A549 (cell line): ENCODE measurements at regions of chr14 and their contacts with region 1.

Region 1: DNA sequence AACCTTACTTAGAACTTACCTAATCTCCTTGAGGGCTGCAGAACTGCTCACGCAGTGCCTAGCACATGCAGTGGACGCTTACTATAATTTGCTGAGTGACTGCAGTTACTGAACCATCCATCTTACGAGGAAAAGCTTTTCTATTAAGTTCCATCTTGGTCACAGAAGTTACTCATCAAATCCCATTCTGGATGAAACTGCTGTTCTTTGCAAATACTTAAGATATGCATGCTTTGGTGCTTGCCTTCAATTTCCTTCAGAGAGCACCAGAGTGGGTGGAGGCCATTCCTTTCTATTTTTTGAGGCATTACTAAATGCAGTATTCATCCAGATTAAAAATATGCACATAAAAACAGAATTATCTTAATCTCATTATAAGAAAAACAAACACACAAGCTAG is 17.7 kb upstream of the PELI2 start:
- DNase-seq: no peak
- ATAC-seq: no peak; a peak in 1 of 6 replicates
- H3K4me3 ChIP-seq: no peak overlapping the region
- H3K27ac ChIP-seq: no peak overlapping the region
- H3K4me1 ChIP-seq: no peaks in the 10 kb centered on the region
- CTCF ChIP-seq: no peak
- EP300 ChIP-seq: no peak
- POLR2A ChIP-seq: no peak
- RAD21 ChIP-seq: no peak

Region 2: GRCh38 chr14:55794655-55795595 is 305.6 kb before region 1 on chr14:
- CTCF ChIA-PET with region 1: no interaction called
- POLR2A ChIA-PET with region 1: interaction called, 12 read pairs
- DNase-seq: peak in 1 of 2 experiments; percentile 52
- ATAC-seq: peak in 1 of 2 experiments; percentile 53; a peak in 3 of 6 replicates
- H3K4me3 ChIP-seq: no peak overlapping the region
- H3K27ac ChIP-seq: no peak overlapping the region
- H3K4me1 ChIP-seq: peaks cover 27% of the 10 kb centered on the region
- CTCF ChIP-seq: no peak
- EP300 ChIP-seq: no peak
- POLR2A ChIP-seq: no peak
- RAD21 ChIP-seq: no peak

Region 3: DNA sequence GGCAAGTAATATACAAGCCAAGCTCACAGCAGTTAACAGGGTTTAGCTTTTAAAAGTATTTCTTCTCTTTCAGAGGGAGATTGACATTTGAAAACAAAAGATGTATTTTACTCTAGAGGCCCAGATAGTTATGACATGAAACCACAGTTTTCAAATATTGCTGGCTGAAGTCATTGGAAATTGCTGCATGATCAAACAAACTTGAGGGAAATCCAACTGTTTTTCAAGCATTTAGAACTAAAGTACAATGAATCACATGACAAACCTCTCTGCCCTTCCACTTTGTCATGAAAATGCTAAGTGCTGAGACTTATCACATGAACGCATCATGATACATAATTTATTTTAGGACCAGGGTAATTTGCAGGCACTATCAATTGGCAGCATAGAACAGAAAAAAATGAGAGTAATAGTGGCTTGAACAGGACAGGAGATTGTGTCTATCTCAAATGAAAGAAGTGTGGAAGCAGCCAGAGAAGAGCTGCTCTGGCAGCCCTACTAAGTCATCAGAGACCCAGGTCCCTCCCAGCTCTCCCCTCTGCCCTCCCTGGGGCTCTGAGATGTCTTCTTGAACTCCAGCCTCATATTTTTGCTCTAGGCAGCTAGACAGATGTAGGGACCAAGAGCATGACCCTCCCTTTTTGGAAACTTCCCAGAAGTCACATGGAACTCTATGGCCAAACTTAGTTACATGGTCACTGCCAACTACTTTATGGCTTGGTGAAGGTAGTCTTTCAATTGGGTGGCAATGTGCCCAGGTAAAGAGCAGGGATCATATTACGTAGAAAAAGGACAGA is 72.4 kb before region 1 on chr14:
- CTCF ChIA-PET with region 1: no interaction called
- POLR2A ChIA-PET with region 1: no interaction called
- DNase-seq: no peak
- ATAC-seq: no peak; a peak in 1 of 6 replicates
- H3K4me3 ChIP-seq: no peak overlapping the region
- H3K27ac ChIP-seq: no peak overlapping the region
- H3K4me1 ChIP-seq: no peaks in the 10 kb centered on the region
- CTCF ChIP-seq: no peak
- EP300 ChIP-seq: no peak
- POLR2A ChIP-seq: no peak
- RAD21 ChIP-seq: no peak

Region 4: DNA sequence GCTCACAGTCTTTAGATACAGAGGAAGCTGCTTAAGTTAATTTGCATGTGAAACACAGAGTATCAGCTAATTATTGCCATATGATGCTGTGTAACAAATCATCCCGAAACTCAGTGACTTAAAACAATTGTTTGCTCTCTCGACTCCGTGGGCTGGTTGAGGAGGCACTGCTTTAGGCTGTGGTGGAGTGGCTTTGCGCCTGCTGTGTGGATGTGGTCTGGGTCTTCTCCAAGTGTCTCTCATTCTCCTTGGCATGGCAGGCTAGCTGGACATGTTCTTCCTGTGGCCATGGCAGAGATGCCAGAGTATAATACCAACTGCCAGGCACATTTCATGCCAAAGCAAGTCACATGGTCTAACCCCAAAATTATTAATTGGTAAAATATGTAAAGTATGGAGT is 58.5 kb after region 1 on chr14:
- CTCF ChIA-PET with region 1: no interaction called
- POLR2A ChIA-PET with region 1: no interaction called
- DNase-seq: no peak
- ATAC-seq: no peak
- H3K4me3 ChIP-seq: no peak overlapping the region
- H3K27ac ChIP-seq: no peak overlapping the region
- H3K4me1 ChIP-seq: no peaks in the 10 kb centered on the region
- CTCF ChIP-seq: no peak
- EP300 ChIP-seq: no peak
- POLR2A ChIP-seq: no peak
- RAD21 ChIP-seq: no peak

Region 5: GRCh38 chr14:56331592-56332216 is 231.1 kb after region 1 on chr14:
- CTCF ChIA-PET with region 1: no interaction called
- POLR2A ChIA-PET with region 1: no interaction called
- DNase-seq: no peak
- ATAC-seq: no peak
- H3K4me3 ChIP-seq: no peak overlapping the region
- H3K27ac ChIP-seq: 0 out of 6 replicates have a peak overlapping the region, but pooled peaks of 1 of the 2 experiments have one; percentile 19
- H3K4me1 ChIP-seq: peaks cover 10% of the 10 kb centered on the region
- CTCF ChIP-seq: no peak
- EP300 ChIP-seq: no peak
- POLR2A ChIP-seq: no peak
- RAD21 ChIP-seq: no peak